Ovary (tissue), 10 donors: ENCODE measurements at regions of chrX and their contacts with region 1.

Region 1: DNA sequence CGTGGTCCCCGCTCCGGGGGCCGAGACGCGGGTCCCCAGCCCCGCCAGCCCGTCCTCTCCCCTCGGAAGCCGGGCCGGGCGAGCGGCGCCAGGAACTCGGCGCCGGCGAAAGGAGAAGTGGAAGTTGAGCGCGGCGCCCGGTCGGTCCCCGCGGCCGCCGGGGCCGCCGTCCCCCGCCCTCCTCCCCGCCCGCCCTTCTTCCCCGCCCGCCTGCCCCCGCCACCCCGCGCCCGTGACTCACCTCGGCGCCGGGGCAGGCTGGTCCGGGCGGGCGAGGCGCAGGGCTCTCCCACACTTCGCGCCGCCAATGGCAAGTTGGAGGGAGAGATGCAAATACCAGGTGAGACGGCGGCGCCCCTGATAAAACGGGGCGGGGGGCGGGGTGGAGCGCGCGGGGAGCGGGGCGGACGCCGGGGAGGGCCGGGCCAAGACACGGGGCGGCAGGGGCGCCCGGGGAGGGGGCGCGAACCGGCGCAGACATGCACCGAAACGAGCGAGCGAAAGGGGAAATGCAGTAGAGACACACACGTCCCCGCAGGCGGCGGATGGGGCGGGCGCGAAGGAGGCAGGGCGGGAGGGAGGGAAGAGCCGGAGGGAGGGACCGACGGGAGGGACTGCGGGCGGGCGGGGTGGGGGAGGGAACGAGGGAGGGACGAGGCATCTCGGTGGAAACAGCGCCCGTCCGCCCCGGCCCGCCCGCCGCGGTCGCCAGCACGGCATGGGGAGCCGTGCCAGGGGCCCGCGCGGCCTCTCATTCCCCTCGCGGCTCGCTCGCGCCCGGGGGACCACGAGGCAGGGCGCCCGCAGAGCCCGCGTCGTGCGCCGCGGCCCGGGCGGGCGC is at the start of gene ELF4:
- DNase-seq: peak; percentile 48 to 64 (median 58)
- H3K4me3 ChIP-seq: peak within 1 kb of the TSS; percentile 52
- H3K27ac ChIP-seq: peak within 1 kb of the TSS; percentile 82 to 93
- H3K4me1 ChIP-seq: peaks cover 2% of the 10 kb centered on the region
- H3K27me3 ChIP-seq: no peaks in the 10 kb centered on the region
- CTCF ChIP-seq: no peak
- EP300 ChIP-seq: no peak
- POLR2A ChIP-seq: no peak
- total RNA-seq, gene ELF4: 9.3 to 24.2 (median 20.2) TPM

Region 2: GRCh38 chrX:130170752-130171445 is 60.3 kb after region 1 on chrX:
- intact Hi-C with region 1: loop called in 1 of 4 experiments (anchors 5 kb)
- DNase-seq: peak in 2 of 5 donors; percentile 34 to 41
- H3K4me3 ChIP-seq: peak overlapping the region; percentile 29
- H3K27ac ChIP-seq: no peak overlapping the region
- H3K4me1 ChIP-seq: no peaks in the 10 kb centered on the region
- H3K27me3 ChIP-seq: no peaks in the 10 kb centered on the region
- CTCF ChIP-seq: no peak
- EP300 ChIP-seq: no peak
- POLR2A ChIP-seq: no peak

Region 3: DNA sequence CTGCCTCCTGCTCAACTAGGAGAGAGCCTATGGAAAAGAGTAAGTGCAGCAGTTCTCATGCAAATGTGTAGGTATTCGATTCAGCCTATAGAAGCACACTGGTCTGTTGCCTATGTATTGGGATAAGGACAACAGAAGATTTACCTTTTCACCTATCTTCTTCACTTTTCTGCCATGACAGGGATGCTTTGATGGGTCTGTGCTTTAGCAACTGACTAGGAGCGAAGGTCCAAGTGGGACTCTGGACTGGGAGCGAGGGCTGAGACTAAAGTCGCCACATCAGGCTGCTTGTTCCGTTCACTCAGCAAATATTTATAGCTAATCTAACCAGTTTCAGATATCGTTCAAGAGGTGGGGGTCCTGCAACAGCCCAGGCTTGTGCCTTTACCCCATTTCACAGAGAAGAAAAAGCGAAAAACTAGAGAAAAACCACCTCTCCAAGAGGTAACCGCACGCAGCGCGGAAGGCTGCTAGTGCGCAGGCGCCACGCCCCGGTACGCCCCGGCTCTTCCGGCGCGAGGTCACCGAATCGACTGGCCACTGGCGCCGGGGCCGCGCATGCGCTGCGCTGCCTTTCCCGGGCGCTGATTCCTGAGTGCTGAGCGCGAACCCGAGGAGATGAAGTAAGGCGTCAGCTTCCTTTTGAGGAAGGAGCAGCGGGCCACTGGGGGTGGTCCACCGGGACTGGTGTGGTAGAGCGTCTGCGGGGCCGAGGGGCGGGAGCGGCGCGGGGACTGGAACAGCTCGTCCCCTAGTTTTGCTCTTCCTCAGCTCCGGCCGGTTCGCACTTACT is 291.0 kb after region 1 on chrX and contains the start of gene RBMX2:
- intact Hi-C with region 1: no loop called
- DNase-seq: peak; percentile 71 to 83 (median 77)
- H3K4me3 ChIP-seq: peak within 1 kb of the TSS; percentile 63
- H3K27ac ChIP-seq: peak within 1 kb of the TSS in 1 of 2 donors; percentile 62
- H3K4me1 ChIP-seq: peaks cover 2% of the 10 kb centered on the region
- H3K27me3 ChIP-seq: no peaks in the 10 kb centered on the region
- CTCF ChIP-seq: no peak
- EP300 ChIP-seq: no peak
- POLR2A ChIP-seq: peak; percentile 38
- total RNA-seq, gene RBMX2: 12.8 to 20.6 (median 17.0) TPM